CD8-positive, alpha-beta T cell (primary cell): ENCODE measurements at regions of chr13 and their contacts with region 1.

Region 1: GRCh38 chr13:110915057-110915873 is at the start of gene ANKRD10:
- DNase-seq: peak; percentile 84 to 95 (median 92)
- ATAC-seq: peak; percentile 73
- H3K4me3 ChIP-seq: peak within 1 kb of the TSS; percentile 90 to 92
- H3K4me3 Mint-ChIP-seq: peak within 1 kb of the TSS; percentile 92
- H3K27ac ChIP-seq: peak within 1 kb of the TSS; percentile 85 to 89
- H3K27ac Mint-ChIP-seq: peak within 1 kb of the TSS; percentile 93
- H3K4me1 ChIP-seq: peaks cover 29% of the 10 kb centered on the region
- H3K4me1 Mint-ChIP-seq: peaks cover 46% of the 10 kb centered on the region
- H3K27me3 ChIP-seq: no peaks in the 10 kb centered on the region
- H3K27me3 Mint-ChIP-seq: no peaks in the 10 kb centered on the region
- CTCF ChIP-seq: peak; percentile 74
- total RNA-seq, gene ANKRD10: 71.5 to 75.0 TPM

Region 2: GRCh38 chr13:110615322-110616102 is 299.8 kb before region 1 on chr13 and contains the start of gene NAXD:
- CTCF ChIA-PET with region 1: no interaction called
- POLR2A ChIA-PET with region 1: no interaction called
- intact Hi-C with region 1: loop called (anchors 2 to 5 kb)
- DNase-seq: peak; percentile 44 to 89 (median 72)
- ATAC-seq: peak; percentile 81
- H3K4me3 ChIP-seq: peak within 1 kb of the TSS; percentile 85 to 90
- H3K4me3 Mint-ChIP-seq: peak within 1 kb of the TSS; percentile 93
- H3K27ac ChIP-seq: peak within 1 kb of the TSS; percentile 53 to 59
- H3K27ac Mint-ChIP-seq: peak within 1 kb of the TSS; percentile 95
- H3K4me1 ChIP-seq: peaks cover 23% of the 10 kb centered on the region
- H3K4me1 Mint-ChIP-seq: peaks cover 34% of the 10 kb centered on the region
- H3K27me3 ChIP-seq: no peaks in the 10 kb centered on the region
- H3K27me3 Mint-ChIP-seq: no peaks in the 10 kb centered on the region
- CTCF ChIP-seq: no peak
- total RNA-seq, gene NAXD: 23.4 to 25.6 TPM

Region 3: DNA sequence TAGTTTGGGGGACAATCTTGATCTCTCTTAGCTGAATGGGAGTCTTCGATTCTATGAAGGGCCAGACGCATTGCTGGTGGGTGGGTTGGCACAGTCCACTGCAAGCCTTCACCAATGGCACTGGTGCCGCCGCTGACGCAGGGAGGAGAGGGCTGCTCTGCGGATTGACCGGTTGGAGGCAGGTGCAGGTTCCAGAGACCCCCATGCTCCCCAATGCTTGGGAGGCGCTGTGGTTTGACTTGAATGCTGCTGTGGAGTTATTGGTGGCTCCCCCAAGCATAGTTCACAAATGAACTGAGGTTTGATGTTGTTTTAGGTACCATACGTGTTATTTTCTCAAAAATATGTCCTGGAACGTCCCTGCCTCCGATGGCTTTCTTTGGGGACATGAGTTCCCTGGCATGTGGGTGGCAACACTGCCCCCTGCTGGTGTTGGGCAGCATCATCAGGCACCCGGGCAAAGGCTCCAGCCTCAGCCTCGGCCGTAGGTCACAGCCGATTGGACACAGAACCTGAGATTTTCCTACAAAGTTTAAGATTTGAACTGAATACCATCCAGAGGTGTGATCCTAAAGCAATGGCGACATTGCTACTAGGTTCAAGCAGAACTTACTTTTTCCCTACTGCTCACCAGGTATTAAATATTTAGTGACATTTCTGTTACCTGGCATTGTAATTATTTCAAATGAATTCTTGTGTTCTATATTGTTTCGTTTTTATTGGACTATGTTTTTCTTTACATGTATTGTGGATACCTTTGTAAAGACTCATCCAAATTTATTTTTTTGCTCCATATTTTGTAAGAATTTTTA is 95.9 kb before region 1 on chr13:
- CTCF ChIA-PET with region 1: no interaction called
- POLR2A ChIA-PET with region 1: no interaction called
- intact Hi-C with region 1: loop called in 1 of 2 experiments (anchors 5 kb)
- DNase-seq: peak; percentile 58 to 87 (median 75)
- ATAC-seq: peak; percentile 79
- H3K4me3 ChIP-seq: no peak overlapping the region
- H3K4me3 Mint-ChIP-seq: no peak overlapping the region
- H3K27ac ChIP-seq: no peak overlapping the region
- H3K27ac Mint-ChIP-seq: no peak overlapping the region
- H3K4me1 ChIP-seq: no peaks in the 10 kb centered on the region
- H3K4me1 Mint-ChIP-seq: peaks cover 18% of the 10 kb centered on the region
- H3K27me3 ChIP-seq: no peaks in the 10 kb centered on the region
- H3K27me3 Mint-ChIP-seq: peaks cover 5% of the 10 kb centered on the region
- CTCF ChIP-seq: peak; percentile 98

Region 4: GRCh38 chr13:110944121-110944967 is 29.1 kb after region 1 on chr13:
- CTCF ChIA-PET with region 1: no interaction called
- POLR2A ChIA-PET with region 1: no interaction called
- intact Hi-C with region 1: no loop called
- DNase-seq: peak in 2 of 9 experiments; percentile 17 to 33
- ATAC-seq: no peak
- H3K4me3 ChIP-seq: no peak overlapping the region
- H3K4me3 Mint-ChIP-seq: no peak overlapping the region
- H3K27ac ChIP-seq: no peak overlapping the region
- H3K27ac Mint-ChIP-seq: no peak overlapping the region
- H3K4me1 ChIP-seq: no peaks in the 10 kb centered on the region
- H3K4me1 Mint-ChIP-seq: no peaks in the 10 kb centered on the region
- H3K27me3 ChIP-seq: no peaks in the 10 kb centered on the region
- H3K27me3 Mint-ChIP-seq: no peaks in the 10 kb centered on the region
- CTCF ChIP-seq: peak; percentile 25

Region 5: GRCh38 chr13:111153279-111153976 is 238.2 kb after region 1 on chr13:
- CTCF ChIA-PET with region 1: no interaction called
- POLR2A ChIA-PET with region 1: no interaction called
- intact Hi-C with region 1: loop called (anchors 1 to 2 kb)
- DNase-seq: peak; percentile 86 to 96 (median 94)
- ATAC-seq: peak; percentile 81
- H3K4me3 ChIP-seq: peak overlapping the region; percentile 67 to 96
- H3K4me3 Mint-ChIP-seq: peak overlapping the region; percentile 96
- H3K27ac ChIP-seq: peak overlapping the region; percentile 75 to 79
- H3K27ac Mint-ChIP-seq: peak overlapping the region; percentile 96
- H3K4me1 ChIP-seq: peaks cover 20% of the 10 kb centered on the region
- H3K4me1 Mint-ChIP-seq: peaks cover 34% of the 10 kb centered on the region
- H3K27me3 ChIP-seq: no peaks in the 10 kb centered on the region
- H3K27me3 Mint-ChIP-seq: no peaks in the 10 kb centered on the region
- CTCF ChIP-seq: no peak

Region 6: GRCh38 chr13:111228262-111229144 is 313.2 kb after region 1 on chr13:
- CTCF ChIA-PET with region 1: no interaction called
- POLR2A ChIA-PET with region 1: no interaction called
- intact Hi-C with region 1: loop called (anchors 5 to 10 kb)
- DNase-seq: no peak
- ATAC-seq: no peak
- H3K4me3 ChIP-seq: no peak overlapping the region
- H3K4me3 Mint-ChIP-seq: no peak overlapping the region
- H3K27ac ChIP-seq: no peak overlapping the region
- H3K27ac Mint-ChIP-seq: no peak overlapping the region
- H3K4me1 ChIP-seq: peaks cover 9% of the 10 kb centered on the region
- H3K4me1 Mint-ChIP-seq: peaks cover 46% of the 10 kb centered on the region
- H3K27me3 ChIP-seq: no peaks in the 10 kb centered on the region
- H3K27me3 Mint-ChIP-seq: no peaks in the 10 kb centered on the region
- CTCF ChIP-seq: no peak